ENCODE measurements at regions of chr1 and their contacts with region 1.

Region 1: GRCh38 chr1:67214420-67215174 is 48.3 kb downstream of the IL23R start:
- DNase-seq: peak; percentile 63
- H3K4me3 Mint-ChIP-seq: no peak overlapping the region
- H3K27ac Mint-ChIP-seq: no peak overlapping the region
- H3K4me1 Mint-ChIP-seq: peaks cover 23% of the 10 kb centered on the region
- H3K27me3 Mint-ChIP-seq: no peaks in the 10 kb centered on the region

Region 2: GRCh38 chr1:66996018-66996682 is 218.4 kb before region 1 on chr1:
- CTCF ChIA-PET with region 1: interaction called, 57 read pairs
- POLR2A ChIA-PET with region 1: interaction called, 9 read pairs
- DNase-seq: peak; percentile 72
- H3K4me3 Mint-ChIP-seq: no peak overlapping the region
- H3K27ac Mint-ChIP-seq: no peak overlapping the region
- H3K4me1 Mint-ChIP-seq: peaks cover 19% of the 10 kb centered on the region
- H3K27me3 Mint-ChIP-seq: no peaks in the 10 kb centered on the region

Region 3: DNA sequence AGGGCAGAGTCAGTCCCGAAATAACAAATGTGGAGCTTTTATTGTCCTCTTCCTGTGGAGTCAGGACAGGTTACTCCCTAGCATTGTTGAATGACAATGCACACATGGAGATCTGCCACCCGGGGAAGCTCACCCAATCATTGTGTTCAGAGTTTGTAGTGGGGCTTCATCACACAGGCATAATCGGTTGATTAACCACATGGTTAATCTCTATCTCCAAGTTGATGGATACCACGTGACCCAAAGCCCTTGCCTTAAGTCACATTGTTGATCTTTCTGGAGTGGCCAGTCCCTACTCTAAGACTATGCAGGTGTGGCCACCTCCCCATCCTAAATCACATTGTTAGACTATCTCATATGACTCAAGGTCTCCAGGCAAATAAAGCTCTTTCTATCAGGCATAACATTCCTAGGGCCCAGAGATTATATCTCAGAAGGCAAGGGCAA is 77.3 kb before region 1 on chr1:
- CTCF ChIA-PET with region 1: interaction called, 20 read pairs
- POLR2A ChIA-PET with region 1: no interaction called
- DNase-seq: no peak
- H3K4me3 Mint-ChIP-seq: no peak overlapping the region
- H3K27ac Mint-ChIP-seq: no peak overlapping the region
- H3K4me1 Mint-ChIP-seq: peaks cover 8% of the 10 kb centered on the region
- H3K27me3 Mint-ChIP-seq: peaks cover 8% of the 10 kb centered on the region

Region 4: DNA sequence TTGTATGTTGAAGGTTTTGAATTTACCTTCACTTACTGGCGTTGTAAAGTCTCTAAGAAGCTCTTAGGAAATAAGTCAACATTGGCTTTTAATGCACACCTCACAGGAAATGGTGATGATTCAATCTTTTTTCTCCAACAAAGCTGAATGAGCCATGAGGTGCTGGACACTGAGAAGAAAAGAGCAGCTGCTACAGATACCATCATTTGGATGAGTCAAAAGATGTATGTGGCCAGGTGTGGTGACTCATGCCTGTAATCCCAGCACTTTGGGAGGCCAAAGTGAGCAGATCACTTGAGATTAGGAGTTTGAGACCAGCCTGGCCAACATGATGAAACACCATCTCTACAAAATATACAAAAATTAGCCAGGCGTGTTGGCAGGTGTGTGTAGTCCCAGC is 51.6 kb before region 1 on chr1:
- CTCF ChIA-PET with region 1: interaction called, 18 read pairs
- POLR2A ChIA-PET with region 1: interaction called, 12 read pairs
- DNase-seq: peak; percentile 71
- H3K4me3 Mint-ChIP-seq: peak overlapping the region; percentile 1
- H3K27ac Mint-ChIP-seq: peak overlapping the region; percentile 81
- H3K4me1 Mint-ChIP-seq: peaks cover 44% of the 10 kb centered on the region
- H3K27me3 Mint-ChIP-seq: peaks cover 1% of the 10 kb centered on the region

Region 5: GRCh38 chr1:67201891-67202290 is 12.7 kb before region 1 on chr1:
- CTCF ChIA-PET with region 1: interaction called, 43 read pairs
- POLR2A ChIA-PET with region 1: interaction called, 3 read pairs
- DNase-seq: no peak
- H3K4me3 Mint-ChIP-seq: no peak overlapping the region
- H3K27ac Mint-ChIP-seq: no peak overlapping the region
- H3K4me1 Mint-ChIP-seq: no peaks in the 10 kb centered on the region
- H3K27me3 Mint-ChIP-seq: no peaks in the 10 kb centered on the region

Region 6: DNA sequence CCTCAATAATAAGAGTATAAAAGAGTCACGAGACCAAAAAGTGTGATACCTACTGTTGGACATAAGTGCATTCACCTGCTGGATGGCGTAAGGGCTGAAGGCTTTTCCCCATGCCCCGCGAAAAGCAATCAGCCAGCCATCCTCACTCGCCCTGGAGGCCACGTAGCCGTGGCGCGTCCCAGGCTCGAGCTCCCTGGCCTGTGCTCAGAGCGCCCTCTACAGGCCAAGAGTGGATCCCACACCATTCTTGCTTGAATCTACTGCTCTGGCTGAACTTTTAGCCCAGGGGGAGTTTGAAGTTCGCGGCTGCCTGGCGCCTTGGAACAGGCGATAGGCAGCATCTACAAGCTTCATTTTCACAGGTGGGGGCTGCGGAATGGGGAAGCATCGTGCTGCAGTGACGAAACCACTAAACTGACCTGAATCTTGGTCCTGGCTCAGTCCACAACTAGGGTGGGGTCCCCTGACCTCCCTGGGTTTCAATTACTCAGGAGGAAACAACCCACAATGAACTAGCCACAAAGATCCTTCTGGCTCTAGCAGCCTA is 285.9 kb after region 1 on chr1:
- CTCF ChIA-PET with region 1: interaction called, 199 read pairs
- POLR2A ChIA-PET with region 1: no interaction called
- DNase-seq: peak; percentile 90
- H3K4me3 Mint-ChIP-seq: no peak overlapping the region
- H3K27ac Mint-ChIP-seq: no peak overlapping the region
- H3K4me1 Mint-ChIP-seq: peaks cover 4% of the 10 kb centered on the region
- H3K27me3 Mint-ChIP-seq: peaks cover 6% of the 10 kb centered on the region

Region 7: GRCh38 chr1:67564193-67564592 is 349.6 kb after region 1 on chr1:
- CTCF ChIA-PET with region 1: no interaction called
- POLR2A ChIA-PET with region 1: no interaction called
- DNase-seq: no peak
- H3K4me3 Mint-ChIP-seq: no peak overlapping the region
- H3K27ac Mint-ChIP-seq: no peak overlapping the region
- H3K4me1 Mint-ChIP-seq: peaks cover 6% of the 10 kb centered on the region
- H3K27me3 Mint-ChIP-seq: no peaks in the 10 kb centered on the region